Right ventricle myocardium inferior (tissue), 1 donor: ENCODE measurements at regions of chr12 and their contacts with region 1.

Region 1: GRCh38 chr12:79935021-79935623 is at the start of gene PPP1R12A:
- DNase-seq: peak; percentile 99
- ATAC-seq: peak; percentile 99
- total RNA-seq, gene PPP1R12A: 43.9 TPM

Region 2: DNA sequence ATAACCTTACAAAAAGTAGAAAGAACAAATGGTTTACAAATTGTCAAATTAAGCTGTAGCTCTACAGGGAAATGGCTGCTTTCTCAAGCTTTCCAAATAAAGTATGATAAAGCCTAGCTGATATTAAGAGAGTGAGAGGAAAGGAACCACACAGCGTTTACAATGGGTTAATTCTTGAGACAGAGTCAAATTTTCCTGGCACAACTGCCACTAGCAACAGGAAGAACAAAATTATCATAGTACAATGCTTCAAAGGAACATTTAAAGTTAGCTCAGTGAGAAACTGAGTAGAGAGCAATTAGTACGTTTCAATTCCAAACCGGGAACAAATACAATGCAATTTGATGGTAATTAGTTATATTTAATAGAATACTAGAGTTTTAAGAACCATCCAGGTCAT is 116.3 kb before region 1 on chr12:
- intact Hi-C with region 1: loop called (anchors 10 kb)
- DNase-seq: no peak
- ATAC-seq: peak; percentile 59

Region 3: GRCh38 chr12:79844693-79845092 is 90.4 kb before region 1 on chr12:
- intact Hi-C with region 1: loop called (anchors 5 kb)
- DNase-seq: no peak
- ATAC-seq: no peak

Region 4: GRCh38 chr12:79886917-79887519 is 48.1 kb before region 1 on chr12:
- intact Hi-C with region 1: loop called (anchors 5 kb)
- DNase-seq: no peak
- ATAC-seq: peak; percentile 56